ENCODE measurements at regions of chr15 and their contacts with region 1.

Region 1: GRCh38 chr15:40763801-40764732 is at the start of gene GCHFR:
- DNase-seq: peak in 1 of 2 donors; percentile 61
- ATAC-seq: peak; percentile 54 to 72
- H3K4me3 ChIP-seq: peak within 1 kb of the TSS; percentile 57 to 66 (median 62)
- H3K27ac ChIP-seq: peak within 1 kb of the TSS; percentile 65 to 82 (median 74)
- H3K4me1 ChIP-seq: peaks cover 21 to 28% of the 10 kb centered on the region in 2 donors
- H3K27me3 ChIP-seq: no peaks in the 10 kb centered on the region
- CTCF ChIP-seq: peak in 4 of 5 experiments; percentile 27 to 47 (median 33)
- POLR2A ChIP-seq: peak; percentile 65 to 74
- total RNA-seq, gene GCHFR: 0.49 to 16.9 (median 14.4) TPM

Region 2: DNA sequence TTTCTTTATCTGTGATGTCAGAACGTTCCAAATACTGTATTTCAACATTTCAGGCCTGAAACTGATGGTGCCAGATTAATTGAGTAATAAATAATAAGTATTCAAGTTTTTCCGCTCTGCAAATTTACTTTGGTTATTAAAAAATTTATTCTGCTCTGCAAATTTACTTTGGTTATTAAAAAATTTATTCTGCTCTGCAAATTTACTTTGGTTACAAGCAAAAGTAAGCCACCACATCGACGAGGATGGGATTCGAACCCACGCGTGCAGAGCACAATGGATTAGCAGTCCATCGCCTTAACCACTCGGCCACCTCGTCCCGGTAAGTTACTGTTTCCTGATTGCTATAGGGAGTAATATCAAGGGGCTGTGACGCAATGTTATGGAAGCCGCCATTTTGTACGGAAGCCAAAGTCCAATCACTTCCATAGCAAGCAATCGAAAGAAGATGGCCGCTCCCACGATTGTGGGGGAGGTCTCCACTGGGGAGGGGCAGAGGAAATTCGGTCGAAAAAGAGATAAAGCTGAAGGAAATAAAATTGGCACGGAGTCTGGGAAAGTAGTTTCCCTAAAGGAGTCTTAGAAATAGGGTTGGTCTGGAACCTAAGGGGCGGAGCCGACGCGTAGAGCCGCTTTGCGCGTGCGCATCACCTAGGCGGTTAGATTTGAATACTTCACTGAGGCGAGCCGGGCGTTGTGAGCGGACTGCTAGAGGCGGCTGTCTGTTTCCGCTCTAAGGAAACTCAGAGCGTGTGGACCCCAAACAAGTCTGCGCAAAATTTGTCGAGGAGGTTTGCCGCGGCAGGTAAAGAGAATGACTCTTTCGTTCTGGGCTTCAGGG is 170.3 kb before region 1 on chr15 and contains the start of gene KNL1:
- in situ Hi-C with region 1: no loop called
- intact Hi-C with region 1: no loop called
- DNase-seq: peak; percentile 83 to 91
- ATAC-seq: peak; percentile 97 to 98
- H3K4me3 ChIP-seq: peak within 1 kb of the TSS; percentile 72 to 88 (median 82)
- H3K27ac ChIP-seq: peak within 1 kb of the TSS; percentile 88 to 97 (median 93)
- H3K4me1 ChIP-seq: peaks cover 9% of the 10 kb centered on the region in 2 donors
- H3K27me3 ChIP-seq: no peaks in the 10 kb centered on the region
- CTCF ChIP-seq: no peak
- POLR2A ChIP-seq: no peak
- total RNA-seq, gene KNL1: 0.10 to 0.33 (median 0.33) TPM in 3 of 4 donors, not detected in the other

Region 3: DNA sequence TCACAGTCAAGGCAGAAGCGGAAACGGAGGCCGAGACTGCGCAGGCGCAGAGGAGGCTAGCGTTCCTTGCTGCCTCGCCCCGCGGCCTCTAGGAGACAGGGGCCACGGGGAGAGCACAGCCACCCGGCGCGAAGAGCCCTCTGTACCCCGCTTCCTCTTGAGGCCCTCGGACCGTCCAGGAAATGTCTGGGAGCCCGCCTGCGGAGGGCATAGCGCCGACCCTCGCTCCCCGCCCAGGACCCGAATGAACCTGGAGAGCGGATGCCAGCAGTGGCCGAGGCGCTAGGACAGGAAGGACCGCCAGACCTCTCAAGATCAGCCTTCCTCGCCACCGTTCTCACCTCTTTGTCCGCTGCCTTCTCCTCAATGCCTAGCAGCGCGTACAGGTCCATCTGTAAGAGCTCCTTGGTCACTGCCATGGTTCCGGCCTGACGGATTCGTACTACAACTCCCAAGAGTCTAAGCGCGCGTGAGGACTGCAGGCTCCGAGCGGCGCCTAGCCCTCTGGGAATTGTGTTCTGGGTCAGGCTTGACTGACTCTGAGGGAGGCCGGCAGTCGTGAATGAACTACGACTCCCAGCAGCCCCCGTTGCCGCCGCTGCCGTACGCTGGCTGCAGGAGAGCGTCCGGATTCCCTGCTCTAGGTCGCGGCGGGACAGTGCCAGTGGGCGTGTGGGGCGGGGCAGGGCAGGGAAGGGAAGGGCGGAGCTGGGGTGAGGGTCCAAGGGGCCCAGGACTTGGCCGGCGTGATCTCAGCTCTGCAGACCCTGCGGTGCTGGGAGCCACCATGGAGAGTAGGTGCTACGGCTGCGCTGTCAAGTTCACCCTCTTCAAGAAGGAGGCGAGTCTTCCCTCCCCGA is 43.2 kb after region 1 on chr15 and contains the starts of genes DNAJC17 and ZFYVE19:
- in situ Hi-C with region 1: loop called in 2 of 4 experiments (anchors 10 kb)
- intact Hi-C with region 1: loop called (anchors 5 kb)
- DNase-seq: peak; percentile 97
- ATAC-seq: peak; percentile 98 to 99
- H3K4me3 ChIP-seq: peak within 1 kb of the TSS; percentile 87 to 100 (median 94)
- H3K27ac ChIP-seq: peak within 1 kb of the TSS; percentile 96 to 100 (median 97)
- H3K4me1 ChIP-seq: peaks cover 19 to 34% of the 10 kb centered on the region in 2 donors
- H3K27me3 ChIP-seq: no peaks in the 10 kb centered on the region
- CTCF ChIP-seq: peak in 1 of 5 experiments; percentile 30
- POLR2A ChIP-seq: peak; percentile 62 to 66
- total RNA-seq, gene DNAJC17: 5.3 to 25.0 (median 11.4) TPM
- total RNA-seq, gene ZFYVE19: 11.4 to 18.9 (median 14.7) TPM

Region 4: GRCh38 chr15:41116116-41116871 is 352.2 kb after region 1 on chr15 and contains the start of gene INO80:
- in situ Hi-C with region 1: no loop called
- intact Hi-C with region 1: loop called (anchors 10 kb)
- DNase-seq: peak; percentile 98
- ATAC-seq: peak; percentile 93 to 94
- H3K4me3 ChIP-seq: peak within 1 kb of the TSS; percentile 81 to 97 (median 90)
- H3K27ac ChIP-seq: peak within 1 kb of the TSS; percentile 97 to 100 (median 100)
- H3K4me1 ChIP-seq: peaks cover 10 to 24% of the 10 kb centered on the region in 2 donors
- H3K27me3 ChIP-seq: no peaks in the 10 kb centered on the region
- CTCF ChIP-seq: peak in 1 of 5 experiments; percentile 32
- POLR2A ChIP-seq: peak; percentile 74 to 77
- total RNA-seq, gene INO80: 25.5 to 33.0 (median 27.8) TPM

Region 5: DNA sequence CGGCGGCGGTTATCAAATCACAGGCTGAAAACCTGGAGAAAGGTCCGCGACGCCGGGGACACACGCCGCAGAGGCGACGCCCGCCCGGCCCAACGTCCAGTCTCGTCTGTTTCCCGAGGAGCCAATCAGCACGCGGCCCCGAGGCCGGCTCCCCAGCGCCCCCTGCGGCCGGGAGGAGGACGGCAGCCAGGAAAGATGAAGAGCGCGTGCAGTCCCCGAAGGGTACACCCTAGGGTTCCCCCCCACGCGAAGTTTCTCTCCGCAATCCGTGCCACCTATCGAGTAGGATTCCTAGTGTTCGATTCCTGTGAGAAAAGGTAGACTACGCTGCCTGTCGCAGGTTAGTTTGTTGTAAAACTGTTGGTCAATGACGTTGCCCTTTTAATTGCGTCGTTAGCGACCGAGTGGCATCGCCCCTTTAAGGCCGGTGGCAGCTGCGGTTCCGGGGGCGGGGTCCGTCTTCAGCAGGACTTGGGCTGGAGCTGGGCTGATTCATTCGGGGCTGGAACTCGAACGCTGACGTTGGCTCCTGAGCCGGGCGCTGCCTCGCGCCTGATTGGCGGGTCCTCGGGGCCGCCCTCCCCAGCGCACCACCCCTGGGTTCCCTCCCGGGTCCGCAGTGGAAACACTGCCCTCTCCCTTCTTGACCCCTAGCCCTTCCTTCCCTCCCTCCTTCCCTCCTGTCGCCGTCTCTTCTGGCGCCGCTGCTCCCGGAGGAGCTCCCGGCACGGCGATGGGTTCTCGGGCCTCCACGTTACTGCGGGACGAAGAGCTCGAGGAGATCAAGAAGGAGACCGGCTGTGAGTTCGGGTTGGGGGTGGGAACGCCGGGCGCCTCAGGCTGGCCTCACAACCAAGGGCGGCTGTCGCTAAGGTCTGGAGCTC is 466.8 kb after region 1 on chr15 and contains the starts of genes CHP1 and EXD1:
- in situ Hi-C with region 1: no loop called
- intact Hi-C with region 1: no loop called
- DNase-seq: peak; percentile 98 to 99
- ATAC-seq: peak; percentile 91 to 94
- H3K4me3 ChIP-seq: peak within 1 kb of the TSS; percentile 73 to 91 (median 86)
- H3K27ac ChIP-seq: peak within 1 kb of the TSS; percentile 91 to 97 (median 94)
- H3K4me1 ChIP-seq: peaks cover 31 to 35% of the 10 kb centered on the region in 2 donors
- H3K27me3 ChIP-seq: no peaks in the 10 kb centered on the region
- CTCF ChIP-seq: peak; percentile 91 to 98 (median 93)
- POLR2A ChIP-seq: peak; percentile 88 to 90
- total RNA-seq, gene CHP1: 208 to 293 (median 266) TPM
- total RNA-seq, gene EXD1: not detected

Measured in gastrocnemius medialis (tissue), 4 donors.